Activated CD4-positive, alpha-beta T cell treated with anti-CD3 and anti-CD28 coated beads for 36 hours (primary cell): ENCODE measurements at regions of chr16 and their contacts with region 1.

Region 1: DNA sequence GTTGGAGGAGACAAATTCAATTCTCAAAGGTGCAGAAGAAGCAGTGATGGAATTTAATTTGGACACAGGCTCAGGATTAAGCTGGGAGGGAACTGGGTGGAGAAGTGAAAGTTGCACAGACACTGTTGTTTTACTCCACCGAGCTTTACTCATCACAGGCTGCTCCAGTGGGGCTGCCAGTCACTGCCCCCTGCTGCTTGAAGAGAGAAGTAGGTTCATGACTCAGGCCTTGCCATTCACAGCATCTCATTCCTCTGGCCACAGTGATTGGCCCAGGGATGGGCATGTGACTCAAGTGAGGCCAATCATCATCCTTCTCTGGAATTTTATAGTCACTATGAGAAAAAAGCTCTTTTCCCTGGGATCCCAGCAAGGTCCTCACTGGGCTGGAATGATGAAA is 11.8 kb downstream of the GNAO1 start:
- DNase-seq: peak; percentile 82
- ATAC-seq: peak; percentile 85
- H3K4me3 Mint-ChIP-seq: no peak overlapping the region
- H3K27ac Mint-ChIP-seq: no peak overlapping the region
- H3K4me1 Mint-ChIP-seq: peaks cover 23% of the 10 kb centered on the region
- H3K27me3 Mint-ChIP-seq: peaks cover 3% of the 10 kb centered on the region

Region 2: DNA sequence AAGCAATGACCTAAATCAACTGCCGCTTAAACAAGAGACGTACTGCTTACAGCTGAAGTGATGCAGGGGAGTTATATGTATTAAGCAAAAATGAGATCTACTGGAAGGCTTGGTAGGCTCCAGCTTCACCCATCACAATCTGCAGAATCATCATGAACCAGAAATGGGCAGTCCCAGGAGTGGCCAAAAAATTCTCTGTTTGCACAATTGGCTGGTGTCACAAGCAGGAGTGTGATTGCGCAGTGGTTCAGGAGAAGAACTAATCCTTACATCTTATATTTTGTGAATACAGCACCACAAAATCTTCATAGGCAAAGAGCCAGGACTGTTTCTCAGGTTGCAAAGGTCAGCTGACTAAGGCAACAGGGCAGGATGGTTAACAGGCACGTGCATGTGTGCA is 446.1 kb before region 1 on chr16:
- CTCF ChIA-PET with region 1: no interaction called
- POLR2A ChIA-PET with region 1: no interaction called
- intact Hi-C with region 1: loop called in 1 of 2 experiments (anchors 2 kb)
- DNase-seq: no peak
- ATAC-seq: no peak
- H3K4me3 Mint-ChIP-seq: no peak overlapping the region
- H3K27ac Mint-ChIP-seq: no peak overlapping the region
- H3K4me1 Mint-ChIP-seq: peaks cover 21% of the 10 kb centered on the region
- H3K27me3 Mint-ChIP-seq: peaks cover 10% of the 10 kb centered on the region

Region 3: GRCh38 chr16:56041686-56042085 is 161.4 kb before region 1 on chr16:
- CTCF ChIA-PET with region 1: interaction called, 5 read pairs
- POLR2A ChIA-PET with region 1: no interaction called
- intact Hi-C with region 1: loop called in 1 of 2 experiments (anchors 1 kb)
- DNase-seq: peak; percentile 60
- ATAC-seq: peak; percentile 86
- H3K4me3 Mint-ChIP-seq: no peak overlapping the region
- H3K27ac Mint-ChIP-seq: no peak overlapping the region
- H3K4me1 Mint-ChIP-seq: no peaks in the 10 kb centered on the region
- H3K27me3 Mint-ChIP-seq: peaks cover 18% of the 10 kb centered on the region

Region 4: GRCh38 chr16:56317998-56318826 is 115.2 kb after region 1 on chr16:
- CTCF ChIA-PET with region 1: interaction called, 17 read pairs
- POLR2A ChIA-PET with region 1: no interaction called
- intact Hi-C with region 1: loop called (anchors 1 to 10 kb)
- DNase-seq: peak; percentile 89
- ATAC-seq: peak; percentile 99
- H3K4me3 Mint-ChIP-seq: no peak overlapping the region
- H3K27ac Mint-ChIP-seq: no peak overlapping the region
- H3K4me1 Mint-ChIP-seq: peaks cover 4% of the 10 kb centered on the region
- H3K27me3 Mint-ChIP-seq: peaks cover 4% of the 10 kb centered on the region

Region 5: DNA sequence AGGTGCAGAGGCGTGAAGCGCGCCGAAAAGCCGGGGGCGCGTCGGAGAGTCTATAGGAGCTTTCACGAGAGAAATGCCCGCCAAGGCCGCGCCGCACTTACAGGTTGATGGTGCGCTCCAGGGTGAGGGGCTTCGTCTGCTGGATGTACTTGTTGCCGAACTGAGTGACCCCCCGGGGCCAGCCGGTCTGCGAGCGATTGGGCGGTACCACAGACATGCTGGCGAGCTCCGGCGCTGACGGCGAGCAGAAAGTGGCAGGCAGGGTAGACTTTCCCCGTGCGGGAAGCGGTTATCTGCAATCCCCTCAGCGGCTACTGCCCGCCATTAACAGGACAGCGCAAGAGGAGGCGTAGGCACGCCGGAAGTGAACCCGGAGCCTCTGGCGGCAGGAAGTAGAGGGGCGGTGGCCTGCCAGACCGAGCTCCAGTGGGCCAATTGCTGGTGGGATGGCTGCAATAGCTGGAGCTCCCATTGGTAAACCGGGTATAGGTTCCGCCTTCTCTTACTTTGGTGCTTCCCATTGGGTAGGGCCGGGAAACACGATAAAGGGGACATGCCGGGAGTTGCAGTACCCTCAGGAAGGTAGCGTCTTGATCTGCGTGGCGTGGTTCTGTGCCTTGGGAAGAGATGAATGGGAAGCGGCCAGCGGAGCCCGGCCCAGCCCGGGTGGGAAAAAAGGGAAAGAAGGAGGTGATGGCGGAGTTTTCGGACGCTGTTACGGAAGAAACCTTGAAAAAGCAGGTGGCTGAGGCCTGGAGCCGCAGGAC is 248.1 kb after region 1 on chr16 and contains the starts of genes NUDT21 and OGFOD1:
- CTCF ChIA-PET with region 1: no interaction called
- POLR2A ChIA-PET with region 1: no interaction called
- intact Hi-C with region 1: loop called in 1 of 2 experiments (anchors 2 kb)
- DNase-seq: peak; percentile 95
- ATAC-seq: peak; percentile 97
- H3K4me3 Mint-ChIP-seq: peak within 1 kb of the TSS; percentile 84
- H3K27ac Mint-ChIP-seq: peak within 1 kb of the TSS; percentile 93
- H3K4me1 Mint-ChIP-seq: peaks cover 51% of the 10 kb centered on the region
- H3K27me3 Mint-ChIP-seq: no peaks in the 10 kb centered on the region
- total RNA-seq, gene NUDT21: 333 to 349 TPM
- total RNA-seq, gene OGFOD1: 56.2 to 64.1 TPM